SK-N-SH (cell line): ENCODE measurements at regions of chr20 and their contacts with region 1.

Region 1: GRCh38 chr20:63495741-63496595 is 2.9 kb downstream of the EEF1A2 start:
- DNase-seq: peak; percentile 90
- H3K4me3 ChIP-seq: peak overlapping the region; percentile 12 to 52; a peak in 2 of 4 replicates
- H3K27ac ChIP-seq: peak overlapping the region in 1 of 2 experiments; percentile 62; a peak in 1 of 4 replicates
- H3K4me1 ChIP-seq: peaks cover 0 to 30% of the 10 kb centered on the region in 2 experiments; a peak in 1 of 4 replicates
- H3K27me3 ChIP-seq: no peaks in the 10 kb centered on the region
- CTCF ChIP-seq: peak; percentile 91
- EP300 ChIP-seq: no peak
- RAD21 ChIP-seq: peak; percentile 65

Region 2: GRCh38 chr20:63434599-63435378 is 61.2 kb before region 1 on chr20:
- CTCF ChIA-PET with region 1: interaction called, 10 read pairs
- POLR2A ChIA-PET with region 1: no interaction called
- DNase-seq: peak; percentile 89
- H3K4me3 ChIP-seq: peak overlapping the region in 1 of 2 experiments; percentile 42; a peak in 1 of 4 replicates
- H3K27ac ChIP-seq: peak overlapping the region in 1 of 2 experiments; percentile 22; a peak in 1 of 4 replicates
- H3K4me1 ChIP-seq: peaks cover 0 to 11% of the 10 kb centered on the region in 2 experiments; a peak in 1 of 4 replicates
- H3K27me3 ChIP-seq: no peaks in the 10 kb centered on the region
- CTCF ChIP-seq: peak; percentile 75
- EP300 ChIP-seq: no peak
- RAD21 ChIP-seq: peak; percentile 79

Region 3: GRCh38 chr20:63463400-63464288 is 32.3 kb before region 1 on chr20:
- CTCF ChIA-PET with region 1: interaction called, 24 read pairs
- POLR2A ChIA-PET with region 1: no interaction called
- DNase-seq: peak; percentile 88
- H3K4me3 ChIP-seq: no peak overlapping the region; a peak in 1 of 4 replicates
- H3K27ac ChIP-seq: peak overlapping the region in 1 of 2 experiments; percentile 97; a peak in 2 of 4 replicates
- H3K4me1 ChIP-seq: peaks cover 0 to 95% of the 10 kb centered on the region in 2 experiments; a peak in 2 of 4 replicates
- H3K27me3 ChIP-seq: peaks cover 17% of the 10 kb centered on the region
- CTCF ChIP-seq: no peak
- EP300 ChIP-seq: peak in 1 of 2 experiments; percentile 48; a peak in 1 of 4 replicates
- RAD21 ChIP-seq: no peak; the same call in 1 of the 2 replicates

Region 4: DNA sequence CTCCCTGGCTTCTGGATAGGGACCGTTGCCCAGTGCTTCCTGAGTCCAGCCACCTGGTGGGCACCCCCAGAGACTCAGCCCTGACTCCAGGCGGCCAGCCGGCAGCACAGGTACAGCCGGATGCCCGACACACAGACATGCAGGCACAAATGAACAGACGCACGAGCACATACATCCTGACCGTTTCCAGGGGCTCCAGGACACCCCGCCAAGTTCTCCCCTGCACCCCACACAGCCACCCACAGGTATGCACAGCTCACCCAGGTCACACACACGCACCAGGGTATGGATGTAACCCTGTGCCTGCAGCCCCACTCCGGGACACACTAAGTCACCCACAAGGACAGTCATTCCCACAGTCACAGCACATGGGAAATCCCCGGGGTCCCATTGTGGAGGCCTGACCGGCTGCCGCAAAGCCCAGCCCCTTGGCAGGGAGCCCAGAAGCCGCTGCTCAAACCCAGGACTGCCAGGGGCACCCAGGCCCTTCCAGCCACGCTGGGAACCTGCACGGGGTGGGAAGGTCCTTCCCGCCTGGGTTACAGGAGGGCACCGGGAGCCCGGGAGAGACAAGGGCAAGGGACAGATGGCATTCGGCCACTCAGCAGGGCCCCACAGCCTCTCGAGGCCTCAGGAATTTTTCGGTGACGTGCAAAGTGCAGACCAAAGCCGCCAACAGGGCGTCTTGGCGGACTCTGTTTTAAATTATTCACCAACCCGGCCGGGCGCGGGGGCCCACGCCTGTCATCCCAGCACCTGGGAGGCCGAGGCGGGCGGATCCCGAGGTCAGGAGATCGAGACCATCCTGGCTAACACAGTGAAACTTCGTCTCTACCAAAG is 12.9 kb before region 1 on chr20:
- CTCF ChIA-PET with region 1: interaction called, 53 read pairs
- POLR2A ChIA-PET with region 1: interaction called, 9 read pairs
- DNase-seq: peak; percentile 93
- H3K4me3 ChIP-seq: no peak overlapping the region
- H3K27ac ChIP-seq: peak overlapping the region in 1 of 2 experiments; percentile 54; a peak in 2 of 4 replicates
- H3K4me1 ChIP-seq: peaks cover 0 to 56% of the 10 kb centered on the region in 2 experiments; a peak in 1 of 4 replicates
- H3K27me3 ChIP-seq: no peaks in the 10 kb centered on the region
- CTCF ChIP-seq: no peak
- EP300 ChIP-seq: no peak
- RAD21 ChIP-seq: peak; percentile 30; the same call in 1 of the 2 replicates

Region 5: DNA sequence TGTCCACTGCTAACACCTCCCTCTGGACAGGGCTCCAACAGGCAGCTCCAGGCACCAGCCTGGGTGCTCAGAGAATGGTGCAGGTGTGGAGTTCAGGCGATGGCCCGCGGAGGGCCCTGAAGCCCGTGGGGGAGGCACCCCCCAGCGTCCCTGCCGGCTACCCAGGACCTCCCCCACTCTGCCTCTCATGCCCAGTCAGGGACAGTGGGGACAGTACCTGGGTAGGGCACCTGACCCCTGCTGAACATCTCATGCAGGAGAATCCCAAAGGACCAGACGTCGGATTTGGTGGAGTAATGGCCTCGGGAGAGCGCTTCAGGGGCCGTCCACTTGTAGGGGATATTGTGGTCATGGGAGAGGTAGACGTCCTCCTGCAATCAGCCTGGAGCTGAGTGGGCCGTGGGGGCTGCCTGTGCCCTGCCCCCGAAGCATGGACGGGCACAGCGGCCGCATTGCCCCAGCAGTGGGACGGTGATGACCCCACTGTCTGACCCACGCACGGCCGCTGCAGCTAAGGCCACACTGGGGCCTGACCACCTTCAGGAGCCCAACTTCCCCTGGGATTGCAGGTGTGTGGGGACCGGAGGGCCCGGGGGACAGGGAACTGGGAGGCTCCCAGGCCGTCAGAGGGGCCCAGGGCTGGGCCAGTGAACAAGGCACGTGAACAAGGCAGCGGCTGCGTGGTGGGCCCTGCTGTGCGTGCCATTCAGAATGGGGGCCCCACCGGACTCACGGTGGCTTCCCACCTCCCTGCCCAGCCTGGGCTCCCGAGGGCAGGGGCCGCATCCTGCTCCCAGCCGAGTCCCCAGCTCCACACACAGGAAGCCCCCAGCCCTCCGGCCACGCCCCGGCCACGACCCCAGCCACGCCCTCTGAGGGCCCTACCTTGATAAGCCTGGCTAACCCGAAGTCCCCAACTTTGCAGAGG is 34.2 kb after region 1 on chr20:
- CTCF ChIA-PET with region 1: interaction called, 45 read pairs
- POLR2A ChIA-PET with region 1: interaction called, 5 read pairs
- DNase-seq: peak; percentile 35
- H3K4me3 ChIP-seq: no peak overlapping the region
- H3K27ac ChIP-seq: no peak overlapping the region
- H3K4me1 ChIP-seq: no peaks in the 10 kb centered on the region
- H3K27me3 ChIP-seq: no peaks in the 10 kb centered on the region
- CTCF ChIP-seq: no peak
- EP300 ChIP-seq: no peak
- RAD21 ChIP-seq: no peak

Region 6: DNA sequence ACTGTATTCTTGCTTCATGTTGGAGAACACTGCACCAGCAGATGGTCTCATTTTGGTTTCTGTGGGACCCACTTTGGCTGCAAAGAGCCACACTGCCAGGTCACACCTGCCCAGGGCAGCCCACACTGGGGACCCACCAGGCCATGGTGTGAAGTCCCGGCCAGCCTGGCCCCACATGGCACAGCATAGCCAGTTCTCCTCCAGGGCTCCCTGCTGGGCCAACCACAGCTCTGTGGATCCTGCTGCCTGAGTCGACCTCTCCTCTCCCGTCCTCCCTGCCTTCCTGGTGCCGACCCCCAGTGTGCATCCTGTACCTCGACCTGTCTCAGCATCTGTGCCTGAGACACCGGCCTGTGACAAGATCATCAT is 208.8 kb after region 1 on chr20:
- CTCF ChIA-PET with region 1: no interaction called
- POLR2A ChIA-PET with region 1: no interaction called
- DNase-seq: no peak
- H3K4me3 ChIP-seq: no peak overlapping the region
- H3K27ac ChIP-seq: no peak overlapping the region
- H3K4me1 ChIP-seq: peaks cover 2 to 30% of the 10 kb centered on the region in 2 experiments; a peak in 2 of 4 replicates
- H3K27me3 ChIP-seq: no peaks in the 10 kb centered on the region
- CTCF ChIP-seq: no peak
- EP300 ChIP-seq: no peak
- RAD21 ChIP-seq: no peak

Region 7: GRCh38 chr20:63739130-63740069 is 243.4 kb after region 1 on chr20 and contains the start of gene SLC2A4RG:
- CTCF ChIA-PET with region 1: no interaction called
- POLR2A ChIA-PET with region 1: no interaction called
- DNase-seq: peak; percentile 99
- H3K4me3 ChIP-seq: peak within 1 kb of the TSS; percentile 81 to 95
- H3K27ac ChIP-seq: peak within 1 kb of the TSS; percentile 72 to 96
- H3K4me1 ChIP-seq: peaks cover 0 to 14% of the 10 kb centered on the region in 2 experiments; a peak in 1 of 4 replicates
- H3K27me3 ChIP-seq: no peaks in the 10 kb centered on the region
- CTCF ChIP-seq: no peak
- EP300 ChIP-seq: no peak
- RAD21 ChIP-seq: no peak
- polyA plus RNA-seq, gene SLC2A4RG: 75.5 and 90.9 TPM in 2 replicates